Head of caudate nucleus (tissue), 42 donors: ENCODE measurements at regions of chr2 and their contacts with region 1.

Region 1: GRCh38 chr2:46451131-46451711 is 28.1 kb upstream of the TMEM247 start:
- DNase-seq: no peak

Region 2: DNA sequence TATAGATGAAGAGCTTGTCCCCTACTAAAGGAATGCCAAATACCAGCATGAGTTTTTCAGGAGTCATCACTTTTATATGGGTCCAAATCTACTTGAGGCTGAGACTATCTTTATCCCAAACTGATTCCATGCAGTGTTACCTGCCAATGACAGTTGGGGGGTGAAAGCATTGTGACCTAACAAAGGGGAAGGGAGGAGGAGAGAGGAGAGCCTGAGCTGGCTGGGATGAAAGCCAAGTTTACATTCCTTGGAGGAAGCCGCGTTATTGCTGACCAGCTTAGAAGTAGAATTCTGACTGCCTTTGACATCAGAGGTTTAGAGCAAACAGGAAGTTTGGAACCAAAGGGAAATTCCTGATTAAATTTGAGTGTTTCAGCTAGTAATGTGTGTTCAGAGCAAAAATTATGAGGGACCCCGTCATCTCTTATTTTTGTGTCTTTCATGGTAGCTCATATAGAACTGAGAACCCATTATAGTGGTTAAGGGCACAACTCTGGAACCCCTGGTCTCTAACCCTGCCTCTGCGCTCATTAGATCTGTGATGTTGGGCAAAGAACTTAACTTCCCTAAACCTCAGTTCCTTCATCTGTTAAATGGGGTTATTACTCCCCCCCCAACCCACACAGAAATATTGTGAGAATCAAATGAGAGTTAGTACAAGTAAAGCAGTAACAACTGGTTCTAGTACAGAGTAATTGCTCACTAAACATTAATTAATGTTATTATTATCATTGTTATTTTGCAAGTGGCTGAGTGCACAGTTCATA is 353.3 kb before region 1 on chr2:
- intact Hi-C with region 1: no loop called
- DNase-seq: peak in 6 of 42 donors; percentile 6 to 67 (median 13)

Region 3: GRCh38 chr2:46385786-46386577 is 65.2 kb before region 1 on chr2:
- intact Hi-C with region 1: loop called (anchors 10 kb)
- DNase-seq: peak in 3 of 42 donors; percentile 21 to 39 (median 24)

Region 4: DNA sequence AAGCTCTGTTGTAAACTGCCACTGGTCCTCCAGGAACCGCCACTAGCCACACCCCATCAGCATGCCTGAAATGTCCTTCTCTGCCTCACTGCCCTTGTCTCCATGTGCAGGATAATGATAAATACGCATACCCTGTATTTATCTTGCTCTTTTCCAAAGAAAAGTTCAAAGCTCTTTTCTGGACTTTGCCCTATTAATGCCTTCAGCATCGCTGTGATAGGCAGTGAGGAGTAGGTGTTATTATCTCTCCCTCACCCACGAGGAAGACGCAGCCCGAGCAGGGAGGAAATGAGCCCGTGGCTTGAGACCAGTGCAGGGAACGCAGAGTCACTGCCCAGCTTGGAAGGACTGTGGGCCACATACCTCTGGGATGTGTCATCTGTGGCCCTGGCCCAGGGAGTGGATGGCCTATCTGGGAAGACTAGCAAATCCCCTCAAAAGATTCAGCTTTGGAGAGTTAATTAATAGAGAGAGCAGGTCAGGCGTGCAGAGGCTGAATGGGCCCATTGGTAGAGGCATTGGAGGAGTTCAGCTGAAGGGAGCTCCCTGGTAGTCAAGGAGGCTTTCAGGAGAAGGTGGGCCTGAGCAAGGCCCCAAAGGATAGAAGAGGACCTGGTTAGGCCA is 503.8 kb after region 1 on chr2:
- intact Hi-C with region 1: no loop called
- DNase-seq: peak in 9 of 42 donors; percentile 13 to 67 (median 35)